Activated CD4-positive, alpha-beta memory T cell treated with anti-CD3 and anti-CD28 coated beads for 36 hours (primary cell): ENCODE measurements at regions of chr12 and their contacts with region 1.

Region 1: DNA sequence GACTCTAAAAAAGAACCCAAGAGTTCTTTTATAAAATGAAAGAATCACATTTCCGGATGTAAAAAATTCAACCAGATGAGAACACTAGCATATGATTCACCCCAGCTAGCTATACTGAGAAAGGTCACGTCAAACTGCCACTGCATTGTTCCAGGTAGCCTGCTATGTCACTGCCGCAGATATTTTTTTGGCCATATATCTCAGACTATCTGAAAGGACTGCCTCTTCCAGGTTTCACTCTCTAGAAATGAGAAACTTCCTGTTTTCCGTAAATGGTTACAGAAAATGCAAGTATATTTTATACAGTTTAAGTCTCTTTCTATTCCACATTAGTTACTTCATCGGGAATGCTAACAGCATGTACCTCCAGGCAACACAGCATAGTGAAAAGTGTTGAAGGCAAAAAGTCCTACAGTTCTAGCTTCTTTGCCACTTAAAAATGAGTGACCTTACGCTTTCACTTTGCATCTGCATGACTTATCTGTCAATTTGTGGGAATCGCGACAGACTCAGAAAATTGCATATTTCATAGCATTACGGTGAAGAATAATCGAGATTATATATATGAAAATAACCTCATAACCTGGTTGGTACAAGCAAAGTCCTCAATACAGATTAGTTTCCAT is 105.2 kb downstream of the MED13L start:
- DNase-seq: peak; percentile 71
- H3K4me3 Mint-ChIP-seq: peak overlapping the region; percentile 56
- H3K27ac Mint-ChIP-seq: peak overlapping the region; percentile 92
- H3K4me1 Mint-ChIP-seq: peaks cover 69% of the 10 kb centered on the region
- H3K27me3 Mint-ChIP-seq: no peaks in the 10 kb centered on the region

Region 2: DNA sequence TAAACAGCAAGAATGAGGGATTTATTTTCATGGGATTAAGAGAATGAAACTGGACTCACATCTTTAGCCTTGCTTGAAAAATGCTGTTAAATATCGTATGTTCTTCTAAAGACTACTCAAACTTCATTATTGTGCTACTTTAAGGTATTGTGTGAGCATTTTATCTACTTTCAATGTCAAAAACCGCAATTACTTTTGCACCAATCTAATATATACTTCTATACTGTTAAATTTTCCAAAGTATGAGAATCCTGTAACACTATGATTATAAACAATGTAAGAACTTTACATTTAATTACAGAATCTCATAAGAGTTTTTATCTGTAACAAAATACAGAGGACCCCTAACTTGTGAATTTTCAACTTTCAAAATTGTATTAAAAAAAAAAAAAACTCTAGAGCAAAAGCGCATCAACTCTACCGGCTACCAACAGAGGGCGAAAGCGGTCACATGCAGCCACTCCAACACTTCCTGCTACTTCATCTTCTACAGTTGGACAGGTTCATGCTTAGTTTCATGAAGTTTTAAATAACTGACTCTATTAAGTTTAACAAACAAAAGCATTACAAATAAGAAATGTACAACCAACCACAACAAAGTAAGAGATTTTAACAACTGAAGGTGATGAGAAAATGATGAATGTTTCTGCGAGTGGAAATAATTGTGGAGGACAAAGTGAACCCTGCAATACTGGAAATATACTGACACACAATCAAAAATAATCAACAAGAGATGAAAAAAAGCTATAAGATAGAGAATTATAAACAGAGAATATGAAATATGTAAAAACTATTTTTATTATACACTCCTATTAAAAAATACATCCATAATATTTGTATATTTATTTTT is 105.7 kb before region 1 on chr12:
- CTCF ChIA-PET with region 1: no interaction called
- POLR2A ChIA-PET with region 1: interaction called, 3 read pairs
- intact Hi-C with region 1: loop called (anchors 2 kb)
- DNase-seq: peak; percentile 71
- H3K4me3 Mint-ChIP-seq: no peak overlapping the region
- H3K27ac Mint-ChIP-seq: no peak overlapping the region
- H3K4me1 Mint-ChIP-seq: peaks cover 34% of the 10 kb centered on the region
- H3K27me3 Mint-ChIP-seq: no peaks in the 10 kb centered on the region

Region 3: GRCh38 chr12:116123451-116124258 is 48.7 kb before region 1 on chr12:
- CTCF ChIA-PET with region 1: interaction called, 3 read pairs
- POLR2A ChIA-PET with region 1: no interaction called
- intact Hi-C with region 1: loop called (anchors 1 kb)
- DNase-seq: peak; percentile 67
- H3K4me3 Mint-ChIP-seq: peak overlapping the region; percentile 49
- H3K27ac Mint-ChIP-seq: peak overlapping the region; percentile 10
- H3K4me1 Mint-ChIP-seq: peaks cover 68% of the 10 kb centered on the region
- H3K27me3 Mint-ChIP-seq: no peaks in the 10 kb centered on the region

Region 4: GRCh38 chr12:116142936-116143898 is 29.1 kb before region 1 on chr12:
- CTCF ChIA-PET with region 1: interaction called, 3 read pairs
- POLR2A ChIA-PET with region 1: no interaction called
- intact Hi-C with region 1: loop called (anchors 1 kb)
- DNase-seq: no peak
- H3K4me3 Mint-ChIP-seq: no peak overlapping the region
- H3K27ac Mint-ChIP-seq: peak overlapping the region; percentile 42
- H3K4me1 Mint-ChIP-seq: peaks cover 51% of the 10 kb centered on the region
- H3K27me3 Mint-ChIP-seq: no peaks in the 10 kb centered on the region

Region 5: GRCh38 chr12:116188581-116188980 is 16.2 kb after region 1 on chr12:
- CTCF ChIA-PET with region 1: interaction called, 4 read pairs
- POLR2A ChIA-PET with region 1: no interaction called
- intact Hi-C with region 1: loop called (anchors 1 kb)
- DNase-seq: no peak
- H3K4me3 Mint-ChIP-seq: no peak overlapping the region
- H3K27ac Mint-ChIP-seq: peak overlapping the region; percentile 51
- H3K4me1 Mint-ChIP-seq: peaks cover 70% of the 10 kb centered on the region
- H3K27me3 Mint-ChIP-seq: no peaks in the 10 kb centered on the region

Region 6: DNA sequence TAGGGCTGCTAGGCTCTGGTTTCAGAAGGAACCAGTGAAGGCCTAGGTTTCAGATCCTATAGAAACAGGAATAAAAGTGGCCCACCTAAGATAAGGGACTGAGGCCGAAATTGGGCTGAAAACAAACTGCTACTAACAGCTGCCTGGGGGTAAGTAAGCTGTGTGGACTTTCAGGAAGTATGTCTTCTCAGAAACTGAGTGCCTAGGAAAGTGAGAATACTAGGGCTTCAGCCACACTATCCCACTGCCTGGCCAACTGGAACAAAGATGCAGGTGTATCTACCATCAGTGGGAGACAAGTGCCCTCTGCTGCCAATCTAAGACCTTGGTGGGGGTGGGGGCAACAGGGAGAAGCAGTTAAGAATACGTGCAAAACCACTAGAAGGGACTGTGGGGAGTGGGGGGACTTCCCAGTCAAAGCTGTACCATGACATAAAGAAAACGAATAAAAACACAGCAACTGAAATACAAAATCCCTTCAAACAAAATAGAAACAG is 22.6 kb after region 1 on chr12:
- CTCF ChIA-PET with region 1: interaction called, 5 read pairs
- POLR2A ChIA-PET with region 1: no interaction called
- intact Hi-C with region 1: loop called (anchors 1 kb)
- DNase-seq: peak; percentile 77
- H3K4me3 Mint-ChIP-seq: no peak overlapping the region
- H3K27ac Mint-ChIP-seq: peak overlapping the region; percentile 4
- H3K4me1 Mint-ChIP-seq: peaks cover 57% of the 10 kb centered on the region
- H3K27me3 Mint-ChIP-seq: no peaks in the 10 kb centered on the region